Left cardiac atrium (tissue), 4 donors: ENCODE measurements at regions of chr9 and their contacts with region 1.

Region 1: DNA sequence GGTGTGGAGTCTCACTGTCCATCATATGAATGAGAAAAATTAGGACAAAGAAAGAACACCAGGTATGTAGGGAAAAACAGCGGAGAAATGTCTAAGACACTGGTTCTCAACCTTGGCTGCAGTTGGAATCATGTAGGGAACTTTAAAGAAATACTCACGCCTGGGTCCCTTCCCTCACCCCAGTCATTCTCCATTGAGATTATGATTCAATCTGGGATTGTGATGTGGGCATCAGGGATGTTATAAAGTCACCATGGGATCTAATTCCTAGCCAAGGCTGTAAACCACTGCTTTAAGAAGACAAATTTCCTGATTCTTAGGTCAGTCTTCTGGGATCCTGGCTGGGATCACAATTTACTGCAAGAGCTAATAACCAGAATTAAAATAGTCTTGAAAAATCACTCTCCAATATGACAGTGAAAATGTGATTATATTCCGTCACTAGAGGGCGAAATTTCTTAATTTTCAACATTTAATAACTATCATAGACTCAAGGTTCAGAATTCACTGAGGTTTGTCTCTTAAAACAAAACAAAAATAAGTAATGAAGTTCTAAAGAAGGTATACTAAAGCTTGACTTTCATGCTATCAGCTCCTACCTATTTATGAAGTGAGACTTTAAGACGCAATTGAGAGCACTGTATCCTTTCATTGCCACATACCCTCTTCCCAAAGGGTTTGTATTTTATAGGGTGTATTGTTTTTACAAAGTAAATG is 60.5 kb downstream of the GLDC start:
- DNase-seq: no peak
- ATAC-seq: no peak

Region 2: GRCh38 chr9:6126374-6126773 is 458.7 kb before region 1 on chr9:
- intact Hi-C with region 1: no loop called
- DNase-seq: no peak
- ATAC-seq: no peak

Region 3: DNA sequence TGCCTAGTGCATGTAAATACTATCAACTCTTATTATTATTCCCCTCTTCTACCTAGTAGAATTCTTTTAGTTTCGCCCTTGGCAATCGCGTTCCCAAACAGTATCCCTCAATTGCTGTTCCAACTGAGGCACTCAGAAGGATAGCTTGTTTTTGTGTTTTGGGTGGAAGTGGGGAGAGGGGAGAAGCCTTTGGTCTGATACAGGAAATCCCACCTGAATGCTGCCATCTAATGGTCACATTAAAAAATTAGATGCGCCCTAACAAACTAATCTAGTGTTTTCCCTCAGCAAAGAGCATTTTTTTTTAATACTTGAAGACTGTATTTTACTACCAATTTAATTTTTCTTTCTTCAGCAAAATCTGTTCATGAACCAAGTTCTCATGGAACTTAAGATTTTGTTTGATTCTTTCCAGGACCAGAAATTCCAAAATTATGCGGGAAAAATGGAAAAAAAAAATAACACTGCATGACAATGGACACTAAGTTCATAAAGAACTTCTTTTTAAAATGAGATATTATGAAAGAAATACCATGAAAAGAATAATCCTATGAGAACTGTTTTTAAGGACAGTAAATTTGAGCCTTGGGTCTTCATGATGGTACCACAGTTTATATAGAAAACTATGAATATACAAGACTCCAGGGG is 82.7 kb after region 1 on chr9:
- intact Hi-C with region 1: loop called in 1 of 2 experiments (anchors 5 kb)
- DNase-seq: no peak
- ATAC-seq: no peak

Region 4: DNA sequence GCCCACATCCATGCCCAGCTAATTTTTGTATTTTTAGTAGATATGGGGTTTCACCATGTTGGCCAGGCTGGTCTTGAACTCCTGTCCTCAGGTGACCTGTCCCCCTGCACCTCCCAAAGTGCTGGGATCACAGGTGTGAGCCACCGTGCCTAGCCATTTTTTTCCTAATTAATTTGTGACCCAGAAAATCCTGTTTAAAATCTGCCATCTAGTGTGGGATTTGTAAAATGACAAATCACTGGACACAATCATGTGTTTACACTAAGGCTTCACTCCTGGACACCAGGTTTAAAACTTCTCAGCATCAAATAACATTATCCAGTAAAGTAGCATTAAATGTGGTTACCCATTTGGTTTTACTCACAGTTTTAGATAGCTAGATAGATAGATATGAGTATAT is 154.2 kb after region 1 on chr9:
- intact Hi-C with region 1: loop called (anchors 10 kb)
- DNase-seq: no peak
- ATAC-seq: no peak